ENCODE measurements at regions of chr5 and their contacts with region 1.

Region 1: DNA sequence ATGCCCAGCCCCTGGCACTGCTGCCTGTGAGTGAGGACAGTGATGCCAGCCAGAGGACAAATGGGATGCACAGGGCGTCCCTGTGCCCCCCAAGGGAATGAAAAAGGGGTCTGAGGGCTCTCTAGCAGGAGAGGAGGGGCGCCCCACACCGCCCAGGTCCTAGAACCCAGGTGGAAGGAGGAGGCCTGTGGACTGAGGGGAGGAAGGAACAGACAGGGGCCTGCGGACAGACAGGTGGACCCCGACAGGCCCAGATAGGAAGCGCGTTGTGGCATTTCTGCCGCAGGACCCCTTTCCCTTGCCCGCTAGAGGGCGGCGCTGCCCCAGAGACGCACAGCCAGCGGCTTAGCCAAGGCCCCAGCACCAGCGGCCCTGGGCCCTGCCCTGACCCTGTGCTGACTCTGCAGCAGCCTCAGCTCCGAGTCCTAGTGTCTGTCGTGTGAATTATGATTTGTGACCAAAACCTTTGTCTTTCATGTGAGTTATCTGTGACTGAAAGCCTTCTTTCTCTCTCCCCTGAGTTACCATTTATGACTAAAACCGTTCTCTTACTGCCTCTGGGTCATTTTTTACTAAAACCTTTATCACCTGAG is 30.7 kb downstream of the TRIP13 start:
- DNase-seq: peak; percentile 95

Region 2: GRCh38 chr5:903756-904096 is 19.7 kb before region 1 on chr5:
- intact Hi-C with region 1: loop called in 1 of 2 experiments (anchors 1 kb)
- DNase-seq: no peak

Region 3: GRCh38 chr5:1140171-1140817 is 216.9 kb after region 1 on chr5:
- intact Hi-C with region 1: loop called (anchors 1 to 5 kb)
- DNase-seq: peak; percentile 94